Spleen (tissue), 13 donors: ENCODE measurements at regions of chr22 and their contacts with region 1.

Region 1: GRCh38 chr22:46233231-46233630 is 16.9 kb downstream of the CDPF1 start:
- DNase-seq: peak; percentile 76
- H3K4me3 ChIP-seq: no peak overlapping the region
- H3K27ac ChIP-seq: peak overlapping the region in 3 of 8 donors; percentile 4 to 40 (median 33)
- H3K4me1 ChIP-seq: peaks cover 0 to 12% (median 9%) of the 10 kb centered on the region in 6 donors
- H3K27me3 ChIP-seq: no peaks in the 10 kb centered on the region
- CTCF ChIP-seq: no peak
- POLR2A ChIP-seq: no peak

Region 2: DNA sequence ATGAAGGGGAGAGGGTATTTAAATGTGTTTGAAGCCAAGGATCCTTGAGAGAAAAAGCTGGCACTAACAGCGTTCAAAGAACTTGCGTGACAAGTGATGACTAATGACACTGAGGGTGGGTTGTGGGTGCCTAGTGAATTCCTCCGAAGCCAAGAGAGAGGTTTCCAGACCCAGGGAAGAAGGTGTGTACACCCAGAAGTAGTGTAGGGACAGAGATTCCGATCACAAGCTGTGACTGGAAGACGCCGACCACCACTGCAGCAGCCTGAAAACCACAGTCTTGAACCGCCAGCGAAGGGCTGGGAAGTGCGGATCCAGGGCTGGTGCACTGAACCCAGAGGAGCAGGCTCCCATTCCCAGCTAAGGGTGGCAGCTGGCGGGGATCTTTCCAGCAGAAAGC is 73.5 kb before region 1 on chr22:
- intact Hi-C with region 1: loop called (anchors 10 kb)
- DNase-seq: no peak
- H3K4me3 ChIP-seq: no peak overlapping the region
- H3K27ac ChIP-seq: no peak overlapping the region
- H3K4me1 ChIP-seq: no peaks in the 10 kb centered on the region
- H3K27me3 ChIP-seq: no peaks in the 10 kb centered on the region
- CTCF ChIP-seq: no peak
- POLR2A ChIP-seq: no peak

Region 3: GRCh38 chr22:46280999-46281623 is 47.9 kb after region 1 on chr22:
- intact Hi-C with region 1: no loop called
- DNase-seq: peak; percentile 86
- H3K4me3 ChIP-seq: peak overlapping the region in 3 of 8 donors; percentile 5 to 55 (median 7)
- H3K27ac ChIP-seq: peak overlapping the region in 7 of 8 donors; percentile 67 to 86 (median 78)
- H3K4me1 ChIP-seq: peaks cover 0 to 81% (median 20%) of the 10 kb centered on the region in 6 donors
- H3K27me3 ChIP-seq: no peaks in the 10 kb centered on the region
- CTCF ChIP-seq: no peak
- POLR2A ChIP-seq: no peak